Mammary epithelial cell (primary cell): ENCODE measurements at regions of chr2 and their contacts with region 1.

Region 1: DNA sequence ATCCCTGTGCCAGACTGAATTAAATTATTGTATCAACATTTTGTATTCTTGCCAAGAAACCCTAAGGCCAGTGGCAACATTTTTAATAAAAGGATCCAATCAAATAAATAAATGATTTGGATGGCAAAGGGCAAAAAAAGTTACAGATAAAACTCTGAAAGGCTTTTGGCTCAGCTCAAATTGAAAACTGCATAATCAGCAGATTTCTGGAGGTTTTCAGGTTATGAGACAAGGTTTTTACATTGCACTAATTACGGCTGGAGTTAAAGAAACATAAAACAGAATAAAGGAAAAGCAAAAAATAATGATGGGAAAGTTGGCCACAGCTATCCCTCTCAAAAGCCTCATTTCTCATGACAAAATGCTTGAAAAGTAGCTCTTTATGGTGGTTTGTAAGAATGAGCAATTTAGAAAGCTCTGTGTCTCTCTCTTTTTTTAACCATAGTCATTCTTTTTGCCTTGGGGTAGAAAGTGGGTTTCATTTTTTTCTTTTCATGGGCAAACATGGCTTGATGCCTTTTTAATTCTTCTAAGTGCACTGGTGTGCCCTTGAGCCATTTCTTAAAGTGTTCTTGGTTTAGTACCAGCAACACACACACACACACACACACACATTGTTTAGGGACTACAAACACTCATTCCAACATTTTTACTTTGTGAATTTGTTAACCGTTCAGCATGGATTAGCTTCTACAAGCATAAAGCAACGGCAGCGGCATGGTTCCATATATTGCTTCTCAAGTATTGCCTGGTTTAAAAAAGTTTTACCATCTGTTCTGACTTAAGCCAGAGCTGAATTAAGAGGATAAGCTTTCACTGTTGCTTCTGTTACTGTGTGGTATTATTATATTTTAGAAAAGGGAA is 747.1 kb upstream of the FSHR start:
- DNase-seq: no peak
- H3K4me3 ChIP-seq: no peak overlapping the region
- H3K27ac ChIP-seq: no peak overlapping the region
- H3K4me1 ChIP-seq: no peaks in the 10 kb centered on the region
- H3K27me3 ChIP-seq: peaks cover 3% of the 10 kb centered on the region
- CTCF ChIP-seq: no peak

Region 2: GRCh38 chr2:49714454-49714853 is 187.0 kb before region 1 on chr2:
- CTCF ChIA-PET with region 1: no interaction called
- dilution Hi-C with region 1: no loop called
- in situ Hi-C with region 1: no loop called
- intact Hi-C with region 1: no loop called
- DNase-seq: no peak
- H3K4me3 ChIP-seq: no peak overlapping the region
- H3K27ac ChIP-seq: no peak overlapping the region
- H3K4me1 ChIP-seq: no peaks in the 10 kb centered on the region
- H3K27me3 ChIP-seq: no peaks in the 10 kb centered on the region
- CTCF ChIP-seq: no peak

Region 3: DNA sequence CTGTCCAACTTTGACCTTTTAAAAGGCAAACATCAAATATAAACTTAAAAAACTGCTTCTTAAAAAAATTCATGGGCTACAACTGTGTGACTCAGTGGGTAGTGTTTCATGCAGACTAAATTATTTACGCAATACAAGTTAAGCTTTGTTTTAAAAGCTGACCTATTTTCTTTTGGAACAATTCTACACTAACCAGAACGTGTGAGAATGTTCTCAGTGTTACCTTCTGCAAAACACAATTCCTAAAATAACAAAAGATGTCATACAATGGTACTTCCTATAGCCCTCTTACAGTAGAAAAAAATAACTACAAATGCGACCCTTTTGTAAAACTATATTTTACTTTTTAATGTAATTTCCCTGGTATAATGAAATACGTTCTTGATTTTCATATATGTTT is 46.7 kb after region 1 on chr2:
- CTCF ChIA-PET with region 1: no interaction called
- dilution Hi-C with region 1: loop called (anchors 5 kb)
- in situ Hi-C with region 1: no loop called
- intact Hi-C with region 1: no loop called
- DNase-seq: no peak
- H3K4me3 ChIP-seq: no peak overlapping the region
- H3K27ac ChIP-seq: no peak overlapping the region
- H3K4me1 ChIP-seq: no peaks in the 10 kb centered on the region
- H3K27me3 ChIP-seq: no peaks in the 10 kb centered on the region
- CTCF ChIP-seq: no peak

Region 4: DNA sequence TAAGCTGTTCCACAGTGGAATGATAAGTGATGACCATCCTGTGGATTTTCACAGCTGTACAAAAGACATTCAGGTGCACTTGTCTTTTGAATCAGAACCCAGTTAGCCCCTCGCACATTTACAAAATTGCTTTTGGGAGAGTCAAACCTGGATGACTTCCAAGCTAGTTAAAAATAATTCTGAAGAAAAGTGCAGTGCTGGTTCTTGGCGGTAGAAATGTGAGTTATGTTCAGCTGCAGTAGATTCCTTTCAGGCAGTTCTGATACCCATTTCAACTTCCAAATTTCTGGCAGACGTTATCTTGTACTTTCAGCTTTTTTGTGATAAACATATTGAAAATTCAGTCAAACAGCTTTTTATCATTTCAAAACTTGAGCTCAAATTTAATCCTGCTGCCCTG is 805.8 kb after region 1 on chr2:
- CTCF ChIA-PET with region 1: no interaction called
- dilution Hi-C with region 1: no loop called
- in situ Hi-C with region 1: no loop called
- intact Hi-C with region 1: no loop called
- DNase-seq: no peak
- H3K4me3 ChIP-seq: no peak overlapping the region
- H3K27ac ChIP-seq: no peak overlapping the region
- H3K4me1 ChIP-seq: no peaks in the 10 kb centered on the region
- H3K27me3 ChIP-seq: peaks cover 2% of the 10 kb centered on the region
- CTCF ChIP-seq: no peak